ENCODE measurements at regions of chr15 and their contacts with region 1.

Region 1: GRCh38 chr15:29821416-29822131 is 694 bp downstream of the TJP1 start:
- DNase-seq: peak; percentile 89
- H3K4me3 ChIP-seq: peak overlapping the region; percentile 98 to 100 (median 99)
- H3K27ac ChIP-seq: peak overlapping the region; percentile 94
- H3K4me1 ChIP-seq: peaks cover 45% of the 10 kb centered on the region
- H3K27me3 ChIP-seq: peaks cover 0 to 3% of the 10 kb centered on the region in 2 experiments
- CTCF ChIP-seq: peak; percentile 9 to 46
- POLR2A ChIP-seq: no peak

Region 2: DNA sequence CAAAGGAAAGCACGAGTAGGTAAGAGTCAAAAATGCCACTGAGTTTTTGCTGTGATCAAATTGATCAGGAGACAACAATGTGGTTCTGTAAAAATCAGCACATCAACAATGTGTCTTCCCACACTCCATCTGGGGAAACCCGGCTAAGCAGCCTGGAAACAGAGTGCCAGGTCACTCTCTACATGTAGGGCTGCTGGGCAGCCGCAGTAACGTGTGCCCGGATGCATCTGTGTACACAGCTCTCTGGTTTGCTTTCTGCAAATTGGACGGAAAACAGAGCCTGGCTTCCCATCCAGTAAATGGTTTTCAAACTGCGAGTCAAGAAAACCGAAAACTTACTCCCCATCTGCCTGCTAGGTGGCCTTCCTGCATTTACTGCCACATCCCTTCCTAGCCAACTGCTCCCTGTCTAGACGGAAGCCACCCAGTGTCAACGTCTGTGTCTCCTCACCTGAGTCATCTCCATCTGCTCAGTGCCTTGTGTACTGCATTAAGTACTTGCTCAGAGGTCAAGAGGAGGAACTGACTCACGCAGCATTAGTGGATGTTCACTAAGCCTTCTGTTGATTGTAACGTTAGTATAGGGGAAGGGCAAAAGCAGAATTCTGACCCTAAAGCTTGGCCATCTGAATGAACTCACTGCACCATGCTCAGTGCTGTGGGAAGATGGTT is 123.4 kb before region 1 on chr15:
- CTCF ChIA-PET with region 1: no interaction called
- POLR2A ChIA-PET with region 1: no interaction called
- dilution Hi-C with region 1: no loop called
- intact Hi-C with region 1: loop called (anchors 5 kb)
- DNase-seq: peak; percentile 90
- H3K4me3 ChIP-seq: no peak overlapping the region
- H3K27ac ChIP-seq: peak overlapping the region; percentile 90
- H3K4me1 ChIP-seq: peaks cover 20% of the 10 kb centered on the region
- H3K27me3 ChIP-seq: no peaks in the 10 kb centered on the region
- CTCF ChIP-seq: no peak
- POLR2A ChIP-seq: no peak

Region 3: GRCh38 chr15:29774900-29775299 is 46.7 kb before region 1 on chr15:
- CTCF ChIA-PET with region 1: no interaction called
- POLR2A ChIA-PET with region 1: no interaction called
- dilution Hi-C with region 1: no loop called
- intact Hi-C with region 1: loop called (anchors 5 kb)
- DNase-seq: no peak
- H3K4me3 ChIP-seq: no peak overlapping the region
- H3K27ac ChIP-seq: no peak overlapping the region
- H3K4me1 ChIP-seq: no peaks in the 10 kb centered on the region
- H3K27me3 ChIP-seq: no peaks in the 10 kb centered on the region
- CTCF ChIP-seq: no peak
- POLR2A ChIP-seq: no peak

Region 4: GRCh38 chr15:29805043-29805707 is 16.4 kb before region 1 on chr15:
- CTCF ChIA-PET with region 1: interaction called, 8 read pairs
- POLR2A ChIA-PET with region 1: interaction called, 7 read pairs
- dilution Hi-C with region 1: no loop called
- intact Hi-C with region 1: loop called (anchors 1 kb)
- DNase-seq: peak; percentile 81
- H3K4me3 ChIP-seq: no peak overlapping the region
- H3K27ac ChIP-seq: no peak overlapping the region
- H3K4me1 ChIP-seq: peaks cover 35% of the 10 kb centered on the region
- H3K27me3 ChIP-seq: no peaks in the 10 kb centered on the region
- CTCF ChIP-seq: no peak
- POLR2A ChIP-seq: no peak

Region 5: GRCh38 chr15:29935276-29936020 is 113.9 kb after region 1 on chr15:
- CTCF ChIA-PET with region 1: interaction called, 3 read pairs
- POLR2A ChIA-PET with region 1: no interaction called
- dilution Hi-C with region 1: no loop called
- intact Hi-C with region 1: loop called (anchors 2 kb)
- DNase-seq: no peak
- H3K4me3 ChIP-seq: no peak overlapping the region
- H3K27ac ChIP-seq: no peak overlapping the region
- H3K4me1 ChIP-seq: peaks cover 35% of the 10 kb centered on the region
- H3K27me3 ChIP-seq: no peaks in the 10 kb centered on the region
- CTCF ChIP-seq: peak; percentile 9 to 14
- POLR2A ChIP-seq: no peak

Region 6: GRCh38 chr15:30065025-30065801 is 243.6 kb after region 1 on chr15:
- CTCF ChIA-PET with region 1: no interaction called
- POLR2A ChIA-PET with region 1: no interaction called
- dilution Hi-C with region 1: no loop called
- intact Hi-C with region 1: no loop called
- DNase-seq: no peak
- H3K4me3 ChIP-seq: no peak overlapping the region
- H3K27ac ChIP-seq: no peak overlapping the region
- H3K4me1 ChIP-seq: no peaks in the 10 kb centered on the region
- H3K27me3 ChIP-seq: no peaks in the 10 kb centered on the region
- CTCF ChIP-seq: no peak
- POLR2A ChIP-seq: no peak

Measured in endothelial cell of umbilical vein (primary cell).